ENCODE measurements at regions of chr18 and their contacts with region 1.

Region 1: GRCh38 chr18:59715966-59716369 is 18.7 kb upstream of the CCBE1 start:
- DNase-seq: peak; percentile 65
- H3K4me3 ChIP-seq: no peak overlapping the region
- H3K27ac ChIP-seq: peak overlapping the region; percentile 84
- H3K27me3 ChIP-seq: no peaks in the 10 kb centered on the region
- CTCF ChIP-seq: peak; percentile 31; the same call in 1 of the 2 replicates

Region 2: GRCh38 chr18:59744271-59744721 is 28.3 kb after region 1 on chr18:
- CTCF ChIA-PET with region 1: no interaction called
- POLR2A ChIA-PET with region 1: interaction called, 23 read pairs
- DNase-seq: peak; percentile 66
- H3K4me3 ChIP-seq: no peak overlapping the region
- H3K27ac ChIP-seq: peak overlapping the region; percentile 70
- H3K27me3 ChIP-seq: no peaks in the 10 kb centered on the region
- CTCF ChIP-seq: no peak

Region 3: GRCh38 chr18:59885579-59886163 is 169.7 kb after region 1 on chr18:
- CTCF ChIA-PET with region 1: no interaction called
- POLR2A ChIA-PET with region 1: no interaction called
- DNase-seq: no peak
- H3K4me3 ChIP-seq: peak overlapping the region; percentile 11
- H3K27ac ChIP-seq: peak overlapping the region; percentile 93
- H3K27me3 ChIP-seq: no peaks in the 10 kb centered on the region
- CTCF ChIP-seq: no peak

Measured in AG04450 (cell line).